ENCODE measurements at regions of chr15 and their contacts with region 1.

Region 1: GRCh38 chr15:35306361-35306981 is 221.4 kb upstream of the NANOGP8 start:
- DNase-seq: peak; percentile 48
- ATAC-seq: peak; percentile 84
- H3K4me3 ChIP-seq: no peak overlapping the region
- H3K27ac ChIP-seq: peak overlapping the region; percentile 14; the same call in 1 of the 2 replicates
- H3K4me1 ChIP-seq: peaks cover 35% of the 10 kb centered on the region
- H3K27me3 ChIP-seq: no peaks in the 10 kb centered on the region
- CTCF ChIP-seq: no peak

Region 2: GRCh38 chr15:35349916-35350315 is 43.4 kb after region 1 on chr15:
- CTCF ChIA-PET with region 1: no interaction called
- POLR2A ChIA-PET with region 1: no interaction called
- intact Hi-C with region 1: loop called (anchors 2 kb)
- DNase-seq: peak; percentile 43
- ATAC-seq: peak; percentile 50
- H3K4me3 ChIP-seq: no peak overlapping the region
- H3K27ac ChIP-seq: no peak overlapping the region
- H3K4me1 ChIP-seq: no peaks in the 10 kb centered on the region
- H3K27me3 ChIP-seq: no peaks in the 10 kb centered on the region
- CTCF ChIP-seq: no peak

Region 3: GRCh38 chr15:35444557-35445204 is 138.2 kb after region 1 on chr15:
- CTCF ChIA-PET with region 1: interaction called, 3 read pairs
- POLR2A ChIA-PET with region 1: no interaction called
- intact Hi-C with region 1: loop called (anchors 5 kb)
- DNase-seq: peak; percentile 76
- ATAC-seq: peak; percentile 14
- H3K4me3 ChIP-seq: no peak overlapping the region
- H3K27ac ChIP-seq: no peak overlapping the region
- H3K4me1 ChIP-seq: peaks cover 31% of the 10 kb centered on the region
- H3K27me3 ChIP-seq: no peaks in the 10 kb centered on the region
- CTCF ChIP-seq: peak; percentile 93